ENCODE measurements at regions of chr20 and their contacts with region 1.

Region 1: DNA sequence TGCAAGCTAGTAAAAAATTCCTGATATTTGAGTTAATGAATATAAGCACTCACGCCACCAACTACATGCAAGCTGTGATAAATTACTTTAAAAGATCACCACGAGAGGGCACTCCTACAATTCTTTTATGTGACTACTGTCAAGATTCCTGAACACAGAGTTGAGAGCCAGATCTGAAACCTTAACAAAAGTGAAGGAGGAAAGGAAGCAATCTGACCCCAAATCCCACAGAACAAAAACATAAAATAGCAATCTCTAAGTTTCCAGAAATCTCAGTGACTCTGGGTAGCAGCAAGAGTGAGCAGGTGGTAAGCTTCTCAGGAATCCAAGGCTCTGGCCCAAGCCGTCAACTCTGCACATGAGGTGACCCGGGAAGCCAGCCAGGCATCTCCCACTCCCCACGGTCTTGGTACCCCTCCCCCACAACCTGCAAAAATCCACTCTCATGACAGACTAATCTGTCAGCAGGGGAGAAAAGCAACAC is 55.1 kb downstream of the STAU1 start:
- DNase-seq: no peak
- ATAC-seq: no peak
- H3K4me3 Mint-ChIP-seq: no peak overlapping the region
- H3K27ac Mint-ChIP-seq: peak overlapping the region; percentile 17
- H3K4me1 Mint-ChIP-seq: peaks cover 2% of the 10 kb centered on the region
- H3K27me3 Mint-ChIP-seq: no peaks in the 10 kb centered on the region
- CTCF ChIP-seq: peak; percentile 56

Region 2: DNA sequence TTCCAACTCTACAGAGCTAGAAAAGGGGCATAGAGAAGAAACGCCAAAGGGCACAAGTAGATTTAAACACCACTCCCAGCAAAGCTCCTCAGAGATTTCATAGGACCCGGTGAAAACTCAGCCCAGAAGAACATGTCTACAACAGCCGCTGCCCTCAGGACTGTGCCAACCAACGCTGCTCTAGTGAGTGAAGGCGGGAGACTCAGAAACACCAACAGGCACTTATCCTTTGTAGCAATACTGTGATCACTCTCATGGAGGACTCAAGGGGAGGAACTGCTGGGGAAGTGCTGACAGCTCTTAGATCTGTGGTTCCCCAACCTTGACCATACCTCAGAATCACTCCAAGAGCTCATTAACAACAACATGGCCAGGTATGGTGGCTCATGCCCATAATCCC is 15.6 kb after region 1 on chr20:
- CTCF ChIA-PET with region 1: interaction called, 10 read pairs
- POLR2A ChIA-PET with region 1: interaction called, 4 read pairs
- intact Hi-C with region 1: no loop called
- DNase-seq: no peak
- ATAC-seq: no peak
- H3K4me3 Mint-ChIP-seq: no peak overlapping the region
- H3K27ac Mint-ChIP-seq: peak overlapping the region; percentile 9
- H3K4me1 Mint-ChIP-seq: peaks cover 4% of the 10 kb centered on the region
- H3K27me3 Mint-ChIP-seq: no peaks in the 10 kb centered on the region
- CTCF ChIP-seq: no peak

Region 3: GRCh38 chr20:49179368-49180277 is 46.6 kb after region 1 on chr20:
- CTCF ChIA-PET with region 1: interaction called, 14 read pairs
- POLR2A ChIA-PET with region 1: interaction called, 5 read pairs
- intact Hi-C with region 1: no loop called
- DNase-seq: no peak
- ATAC-seq: no peak
- H3K4me3 Mint-ChIP-seq: no peak overlapping the region
- H3K27ac Mint-ChIP-seq: peak overlapping the region; percentile 43
- H3K4me1 Mint-ChIP-seq: peaks cover 53% of the 10 kb centered on the region
- H3K27me3 Mint-ChIP-seq: no peaks in the 10 kb centered on the region
- CTCF ChIP-seq: no peak

Region 4: DNA sequence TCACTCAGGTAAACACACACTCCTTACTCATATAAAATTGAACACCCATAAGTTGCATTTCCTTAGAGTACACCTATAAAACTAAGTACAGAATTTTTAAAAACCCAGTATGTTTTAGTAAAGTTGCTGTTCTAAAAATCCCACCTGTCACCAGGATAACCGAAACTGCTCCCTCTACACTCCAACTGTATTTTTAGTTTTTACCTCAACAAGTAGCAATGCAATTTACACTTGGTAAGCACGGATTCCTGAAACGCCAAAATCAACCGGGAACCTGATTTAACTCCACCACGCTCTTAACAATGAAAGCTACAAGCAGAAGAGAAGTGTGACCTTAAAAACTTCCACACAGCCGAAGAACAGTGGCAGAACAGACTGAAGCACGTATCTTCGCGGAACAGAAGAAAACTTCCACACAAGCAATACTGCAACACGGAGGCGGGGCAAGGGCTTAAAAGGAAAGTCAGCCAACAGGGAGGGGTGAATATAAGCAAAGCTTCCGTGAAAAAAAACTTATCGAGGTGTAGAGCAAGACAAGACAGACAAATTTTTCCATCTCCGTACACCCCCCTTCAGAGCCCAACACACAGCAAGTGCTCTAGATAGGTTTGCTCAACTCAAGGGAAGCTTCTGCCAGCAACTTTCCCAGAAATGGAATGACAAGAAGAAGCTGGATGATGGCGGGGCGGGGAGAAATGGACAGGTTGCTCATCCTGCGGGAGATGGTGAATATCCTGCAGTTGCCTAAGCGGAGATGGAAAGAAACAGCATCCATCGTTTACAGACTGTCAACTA is 53.7 kb after region 1 on chr20:
- CTCF ChIA-PET with region 1: interaction called, 11 read pairs
- POLR2A ChIA-PET with region 1: interaction called, 4 read pairs
- intact Hi-C with region 1: no loop called
- DNase-seq: peak; percentile 87
- ATAC-seq: peak; percentile 52
- H3K4me3 Mint-ChIP-seq: peak overlapping the region; percentile 89
- H3K27ac Mint-ChIP-seq: peak overlapping the region; percentile 95
- H3K4me1 Mint-ChIP-seq: peaks cover 45% of the 10 kb centered on the region
- H3K27me3 Mint-ChIP-seq: no peaks in the 10 kb centered on the region
- CTCF ChIP-seq: no peak

Region 5: DNA sequence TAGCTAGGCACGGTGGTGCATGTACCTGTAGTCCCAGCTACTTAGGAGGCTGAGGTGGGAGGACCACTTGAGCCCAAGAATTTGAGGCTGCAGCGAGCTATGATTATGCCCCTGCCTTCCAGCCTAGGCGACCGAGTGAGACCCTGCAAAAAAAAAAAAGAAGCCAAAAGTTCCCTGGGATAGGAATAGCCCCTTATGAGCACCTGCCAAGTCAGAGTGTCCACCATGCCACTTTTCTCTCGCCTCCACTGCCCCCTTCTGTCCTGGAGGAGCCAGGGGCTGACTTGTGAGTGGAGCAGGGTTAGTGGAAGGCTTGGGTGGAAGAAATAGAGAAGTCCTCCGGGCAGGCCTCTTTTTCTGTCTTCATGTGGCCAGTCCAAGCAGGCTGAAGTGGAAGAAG is 74.0 kb after region 1 on chr20:
- CTCF ChIA-PET with region 1: interaction called, 31 read pairs
- POLR2A ChIA-PET with region 1: no interaction called
- intact Hi-C with region 1: no loop called
- DNase-seq: peak; percentile 45
- ATAC-seq: peak; percentile 56
- H3K4me3 Mint-ChIP-seq: no peak overlapping the region
- H3K27ac Mint-ChIP-seq: no peak overlapping the region
- H3K4me1 Mint-ChIP-seq: no peaks in the 10 kb centered on the region
- H3K27me3 Mint-ChIP-seq: no peaks in the 10 kb centered on the region
- CTCF ChIP-seq: peak; percentile 26

Region 6: DNA sequence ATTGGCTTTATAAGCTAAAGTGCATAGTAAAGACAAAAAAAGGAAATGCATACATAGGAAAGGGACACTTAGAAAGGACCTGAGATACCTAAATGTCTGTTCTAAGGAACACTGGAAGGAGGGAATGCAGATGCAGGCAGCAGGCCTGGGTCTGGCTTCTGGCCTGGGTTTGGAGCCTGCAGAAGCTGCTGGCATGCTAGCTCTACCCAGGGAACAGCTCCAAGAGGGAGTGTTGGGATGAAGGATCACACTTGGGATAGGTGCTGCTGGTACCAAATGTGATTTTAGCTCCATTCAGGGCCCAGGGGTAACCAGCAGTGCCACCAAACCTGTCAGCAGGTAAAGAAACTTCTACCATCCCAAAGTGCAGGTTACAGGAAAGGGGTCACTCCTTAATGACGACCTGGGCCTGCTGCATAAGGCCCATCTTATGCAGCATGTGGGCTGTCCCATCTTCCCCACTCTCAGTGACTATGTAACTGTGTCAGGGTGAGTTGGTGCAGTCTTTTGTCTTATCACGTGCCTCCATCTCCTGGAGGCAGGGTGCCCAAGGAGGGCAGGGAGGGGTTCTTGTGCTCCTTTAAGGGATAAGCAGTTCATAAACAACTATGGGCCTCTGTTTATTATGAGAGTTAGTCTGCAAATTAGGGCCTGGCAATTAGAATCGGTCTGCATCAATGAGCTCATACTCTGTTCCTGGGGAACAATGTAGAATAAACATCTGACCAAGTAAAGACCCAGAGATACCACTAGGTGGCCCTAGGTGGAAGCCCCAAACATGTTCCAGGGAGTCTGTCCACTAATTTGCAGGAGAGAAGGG is 113.1 kb after region 1 on chr20:
- CTCF ChIA-PET with region 1: interaction called, 10 read pairs
- POLR2A ChIA-PET with region 1: no interaction called
- intact Hi-C with region 1: no loop called
- DNase-seq: peak; percentile 40
- ATAC-seq: peak; percentile 90
- H3K4me3 Mint-ChIP-seq: no peak overlapping the region
- H3K27ac Mint-ChIP-seq: peak overlapping the region; percentile 69
- H3K4me1 Mint-ChIP-seq: no peaks in the 10 kb centered on the region
- H3K27me3 Mint-ChIP-seq: no peaks in the 10 kb centered on the region
- CTCF ChIP-seq: no peak